ENCODE measurements at regions of chr5 and their contacts with region 1.

Region 1: GRCh38 chr5:179763215-179763945 is 30.4 kb upstream of the LTC4S start:
- DNase-seq: peak in 8 of 9 experiments; percentile 24 to 78 (median 56)
- ATAC-seq: peak; percentile 81
- H3K4me3 ChIP-seq: no peak overlapping the region
- H3K4me3 Mint-ChIP-seq: no peak overlapping the region
- H3K27ac ChIP-seq: no peak overlapping the region
- H3K27ac Mint-ChIP-seq: no peak overlapping the region
- H3K4me1 ChIP-seq: peaks cover 14% of the 10 kb centered on the region
- H3K4me1 Mint-ChIP-seq: peaks cover 57% of the 10 kb centered on the region
- H3K27me3 ChIP-seq: no peaks in the 10 kb centered on the region
- H3K27me3 Mint-ChIP-seq: no peaks in the 10 kb centered on the region
- CTCF ChIP-seq: peak; percentile 97

Region 2: DNA sequence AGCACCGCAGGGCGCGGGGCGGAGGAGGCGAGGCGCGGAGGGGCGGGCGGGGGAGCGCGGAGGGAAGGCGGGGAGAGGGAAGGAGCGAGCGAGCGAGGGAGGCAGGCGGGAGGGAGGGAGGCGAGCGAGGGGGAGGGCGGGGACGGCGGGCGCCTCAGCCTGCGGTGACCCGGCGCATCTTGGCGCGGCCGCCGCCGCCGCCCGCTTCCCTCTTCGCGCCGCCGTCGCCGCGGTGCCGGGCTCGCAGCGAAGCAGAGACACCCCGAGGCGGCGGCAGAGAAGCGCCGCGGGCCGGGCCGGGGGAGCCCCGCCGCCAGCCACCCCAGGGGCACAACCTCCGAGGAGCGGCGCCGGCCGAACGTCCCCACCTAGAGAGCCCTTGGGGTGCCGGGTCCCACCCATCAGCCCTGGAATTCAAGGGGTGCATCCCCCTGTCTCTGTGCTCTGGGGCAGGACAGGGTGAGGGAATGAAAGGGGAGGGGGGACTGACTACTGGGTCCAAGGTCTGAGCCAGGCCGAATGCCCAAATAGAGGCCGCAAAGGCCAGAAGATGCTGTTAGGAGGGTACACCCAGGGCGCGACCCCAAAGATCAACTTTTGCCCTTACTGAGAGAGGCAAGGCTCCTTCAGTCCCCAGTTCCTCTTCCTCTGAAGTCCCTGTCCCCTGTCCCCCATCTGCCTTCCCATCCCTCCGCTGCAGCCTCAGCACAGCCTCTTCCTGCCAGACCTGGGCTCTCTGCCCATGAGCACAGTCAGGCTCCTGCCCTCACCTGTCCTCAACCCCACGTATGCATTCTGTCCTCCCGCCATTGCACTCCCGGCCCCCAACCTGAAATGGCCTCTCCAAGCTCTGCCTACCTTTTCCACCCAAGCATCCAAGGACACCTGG is 417.7 kb before region 1 on chr5 and contains the start of gene ADAMTS2:
- CTCF ChIA-PET with region 1: no interaction called
- POLR2A ChIA-PET with region 1: no interaction called
- intact Hi-C with region 1: no loop called
- DNase-seq: no peak
- ATAC-seq: no peak
- H3K4me3 ChIP-seq: no peak within 1 kb of the TSS
- H3K4me3 Mint-ChIP-seq: peak within 1 kb of the TSS; percentile 61
- H3K27ac ChIP-seq: no peak within 1 kb of the TSS
- H3K27ac Mint-ChIP-seq: no peak within 1 kb of the TSS
- H3K4me1 ChIP-seq: peaks cover 6% of the 10 kb centered on the region
- H3K4me1 Mint-ChIP-seq: peaks cover 14% of the 10 kb centered on the region
- H3K27me3 ChIP-seq: peaks cover 3 to 5% of the 10 kb centered on the region in 2 experiments
- H3K27me3 Mint-ChIP-seq: peaks cover 42% of the 10 kb centered on the region
- CTCF ChIP-seq: no peak
- total RNA-seq, gene ADAMTS2: not detected

Region 3: GRCh38 chr5:179738742-179739141 is 24.6 kb before region 1 on chr5:
- CTCF ChIA-PET with region 1: interaction called, 13 read pairs
- POLR2A ChIA-PET with region 1: no interaction called
- intact Hi-C with region 1: no loop called
- DNase-seq: no peak
- ATAC-seq: no peak
- H3K4me3 ChIP-seq: no peak overlapping the region
- H3K4me3 Mint-ChIP-seq: no peak overlapping the region
- H3K27ac ChIP-seq: no peak overlapping the region
- H3K27ac Mint-ChIP-seq: peak overlapping the region; percentile 0
- H3K4me1 ChIP-seq: peaks cover 43% of the 10 kb centered on the region
- H3K4me1 Mint-ChIP-seq: peaks cover 67% of the 10 kb centered on the region
- H3K27me3 ChIP-seq: no peaks in the 10 kb centered on the region
- H3K27me3 Mint-ChIP-seq: no peaks in the 10 kb centered on the region
- CTCF ChIP-seq: no peak

Region 4: GRCh38 chr5:179777909-179778308 is 14.5 kb after region 1 on chr5:
- CTCF ChIA-PET with region 1: interaction called, 15 read pairs
- POLR2A ChIA-PET with region 1: no interaction called
- intact Hi-C with region 1: no loop called
- DNase-seq: no peak
- ATAC-seq: no peak
- H3K4me3 ChIP-seq: no peak overlapping the region
- H3K4me3 Mint-ChIP-seq: no peak overlapping the region
- H3K27ac ChIP-seq: no peak overlapping the region
- H3K27ac Mint-ChIP-seq: peak overlapping the region; percentile 57
- H3K4me1 ChIP-seq: no peaks in the 10 kb centered on the region
- H3K4me1 Mint-ChIP-seq: no peaks in the 10 kb centered on the region
- H3K27me3 ChIP-seq: no peaks in the 10 kb centered on the region
- H3K27me3 Mint-ChIP-seq: no peaks in the 10 kb centered on the region
- CTCF ChIP-seq: no peak

Region 5: DNA sequence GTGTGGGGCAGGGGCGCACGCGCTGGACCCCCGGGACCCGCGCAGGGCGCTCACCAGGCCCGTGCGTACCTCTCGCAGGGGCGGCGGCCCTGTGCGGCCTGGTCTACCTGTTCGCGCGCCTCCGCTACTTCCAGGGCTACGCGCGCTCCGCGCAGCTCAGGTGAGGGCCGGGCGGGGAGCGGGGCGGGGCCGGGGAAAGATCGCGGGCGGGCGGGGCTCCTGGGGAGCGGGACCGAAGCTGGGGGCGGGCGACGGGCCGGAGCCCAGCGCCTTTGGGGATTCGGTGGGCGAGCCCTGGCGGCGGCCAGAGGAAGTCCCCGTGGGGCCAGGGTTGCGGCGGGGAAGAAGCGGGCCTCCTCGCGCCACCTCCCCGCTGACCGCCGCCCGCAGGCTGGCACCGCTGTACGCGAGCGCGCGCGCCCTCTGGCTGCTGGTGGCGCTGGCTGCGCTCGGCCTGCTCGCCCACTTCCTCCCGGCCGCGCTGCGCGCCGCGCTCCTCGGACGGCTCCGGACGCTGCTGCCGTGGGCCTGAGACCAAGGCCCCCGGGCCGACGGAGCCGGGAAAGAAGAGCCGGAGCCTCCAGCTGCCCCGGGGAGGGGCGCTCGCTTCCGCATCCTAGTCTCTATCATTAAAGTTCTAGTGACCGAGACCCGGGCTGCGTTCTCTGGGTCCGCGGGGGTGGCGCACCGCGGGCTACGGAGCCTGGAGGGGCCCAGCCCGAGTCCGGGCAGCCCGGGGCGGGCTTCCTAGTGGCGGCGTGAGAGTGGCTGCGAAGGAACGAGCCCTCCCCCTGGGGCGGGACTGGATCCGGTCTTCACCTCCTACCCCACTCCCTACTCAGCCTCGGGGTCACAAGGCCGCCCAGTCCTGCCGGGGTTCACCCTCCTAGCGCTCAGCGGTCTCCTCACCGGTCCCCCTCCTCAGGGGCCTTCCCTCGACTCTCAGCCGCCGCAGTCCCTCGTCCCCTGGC is 32.8 kb after region 1 on chr5:
- CTCF ChIA-PET with region 1: interaction called, 53 read pairs
- POLR2A ChIA-PET with region 1: interaction called, 6 read pairs
- intact Hi-C with region 1: loop called (anchors 1 kb)
- DNase-seq: peak; percentile 43 to 86 (median 66)
- ATAC-seq: peak; percentile 64
- H3K4me3 ChIP-seq: peak overlapping the region; percentile 36 to 50
- H3K4me3 Mint-ChIP-seq: peak overlapping the region; percentile 75
- H3K27ac ChIP-seq: peak overlapping the region; percentile 23 to 31
- H3K27ac Mint-ChIP-seq: peak overlapping the region; percentile 37
- H3K4me1 ChIP-seq: peaks cover 33% of the 10 kb centered on the region
- H3K4me1 Mint-ChIP-seq: peaks cover 29% of the 10 kb centered on the region
- H3K27me3 ChIP-seq: no peaks in the 10 kb centered on the region
- H3K27me3 Mint-ChIP-seq: no peaks in the 10 kb centered on the region
- CTCF ChIP-seq: peak; percentile 67

Region 6: GRCh38 chr5:179858586-179859427 is 95.4 kb after region 1 on chr5 and contains the start of gene MRNIP:
- CTCF ChIA-PET with region 1: interaction called, 4 read pairs
- POLR2A ChIA-PET with region 1: no interaction called
- intact Hi-C with region 1: loop called in 1 of 2 experiments (anchors 5 kb)
- DNase-seq: peak; percentile 66 to 94 (median 90)
- ATAC-seq: peak; percentile 95
- H3K4me3 ChIP-seq: peak within 1 kb of the TSS; percentile 94 to 98
- H3K4me3 Mint-ChIP-seq: peak within 1 kb of the TSS; percentile 96
- H3K27ac ChIP-seq: peak within 1 kb of the TSS; percentile 57 to 88
- H3K27ac Mint-ChIP-seq: peak within 1 kb of the TSS; percentile 92
- H3K4me1 ChIP-seq: peaks cover 8% of the 10 kb centered on the region
- H3K4me1 Mint-ChIP-seq: peaks cover 22% of the 10 kb centered on the region
- H3K27me3 ChIP-seq: no peaks in the 10 kb centered on the region
- H3K27me3 Mint-ChIP-seq: no peaks in the 10 kb centered on the region
- CTCF ChIP-seq: no peak
- total RNA-seq, gene MRNIP: 30.0 to 38.5 TPM

Region 7: GRCh38 chr5:180090098-180090768 is 326.9 kb after region 1 on chr5:
- CTCF ChIA-PET with region 1: interaction called, 3 read pairs
- POLR2A ChIA-PET with region 1: no interaction called
- intact Hi-C with region 1: loop called (anchors 1 to 2 kb)
- DNase-seq: peak; percentile 62 to 90 (median 81)
- ATAC-seq: peak; percentile 71
- H3K4me3 ChIP-seq: peak overlapping the region; percentile 57
- H3K4me3 Mint-ChIP-seq: peak overlapping the region; percentile 86
- H3K27ac ChIP-seq: peak overlapping the region in 1 of 2 experiments; percentile 42
- H3K27ac Mint-ChIP-seq: peak overlapping the region; percentile 88
- H3K4me1 ChIP-seq: peaks cover 16% of the 10 kb centered on the region
- H3K4me1 Mint-ChIP-seq: peaks cover 27% of the 10 kb centered on the region
- H3K27me3 ChIP-seq: no peaks in the 10 kb centered on the region
- H3K27me3 Mint-ChIP-seq: peaks cover 4% of the 10 kb centered on the region
- CTCF ChIP-seq: peak; percentile 68